ENCODE measurements at regions of chr6 and their contacts with region 1.

Region 1: GRCh38 chr6:73580247-73581149 is 59.7 kb upstream of the EEF1A1 start:
- DNase-seq: peak; percentile 87
- H3K4me3 Mint-ChIP-seq: peak overlapping the region; percentile 71
- H3K27ac Mint-ChIP-seq: peak overlapping the region; percentile 99
- H3K4me1 Mint-ChIP-seq: peaks cover 19% of the 10 kb centered on the region
- H3K27me3 Mint-ChIP-seq: no peaks in the 10 kb centered on the region

Region 2: GRCh38 chr6:73565767-73566485 is 14.6 kb before region 1 on chr6:
- intact Hi-C with region 1: loop called (anchors 2 kb)
- DNase-seq: no peak
- H3K4me3 Mint-ChIP-seq: no peak overlapping the region
- H3K27ac Mint-ChIP-seq: no peak overlapping the region
- H3K4me1 Mint-ChIP-seq: no peaks in the 10 kb centered on the region
- H3K27me3 Mint-ChIP-seq: no peaks in the 10 kb centered on the region

Region 3: DNA sequence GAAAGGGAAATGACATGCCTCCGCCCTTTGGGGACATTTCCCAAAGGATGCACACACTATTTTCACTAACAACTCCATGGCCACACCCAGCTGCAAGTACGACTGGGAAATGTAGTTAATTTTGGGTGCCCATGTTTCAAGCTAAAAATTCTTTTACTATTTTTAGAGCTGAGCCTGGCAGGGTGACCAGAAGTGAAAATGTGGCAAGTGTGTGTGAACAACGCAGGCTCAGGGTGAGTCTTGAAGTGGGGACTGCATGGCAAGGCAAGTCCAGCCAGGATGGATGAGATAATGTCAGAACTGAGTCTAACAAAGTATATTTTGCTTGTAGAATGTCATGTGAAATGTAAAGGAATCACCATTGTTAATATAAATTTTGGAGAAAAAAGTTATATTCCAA is 98.5 kb after region 1 on chr6:
- intact Hi-C with region 1: no loop called
- DNase-seq: no peak
- H3K4me3 Mint-ChIP-seq: no peak overlapping the region
- H3K27ac Mint-ChIP-seq: no peak overlapping the region
- H3K4me1 Mint-ChIP-seq: no peaks in the 10 kb centered on the region
- H3K27me3 Mint-ChIP-seq: peaks cover 6% of the 10 kb centered on the region